Activated CD4-positive, alpha-beta memory T cell treated with anti-CD3 and anti-CD28 coated beads for 36 hours (primary cell): ENCODE measurements at regions of chr11 and their contacts with region 1.

Region 1: DNA sequence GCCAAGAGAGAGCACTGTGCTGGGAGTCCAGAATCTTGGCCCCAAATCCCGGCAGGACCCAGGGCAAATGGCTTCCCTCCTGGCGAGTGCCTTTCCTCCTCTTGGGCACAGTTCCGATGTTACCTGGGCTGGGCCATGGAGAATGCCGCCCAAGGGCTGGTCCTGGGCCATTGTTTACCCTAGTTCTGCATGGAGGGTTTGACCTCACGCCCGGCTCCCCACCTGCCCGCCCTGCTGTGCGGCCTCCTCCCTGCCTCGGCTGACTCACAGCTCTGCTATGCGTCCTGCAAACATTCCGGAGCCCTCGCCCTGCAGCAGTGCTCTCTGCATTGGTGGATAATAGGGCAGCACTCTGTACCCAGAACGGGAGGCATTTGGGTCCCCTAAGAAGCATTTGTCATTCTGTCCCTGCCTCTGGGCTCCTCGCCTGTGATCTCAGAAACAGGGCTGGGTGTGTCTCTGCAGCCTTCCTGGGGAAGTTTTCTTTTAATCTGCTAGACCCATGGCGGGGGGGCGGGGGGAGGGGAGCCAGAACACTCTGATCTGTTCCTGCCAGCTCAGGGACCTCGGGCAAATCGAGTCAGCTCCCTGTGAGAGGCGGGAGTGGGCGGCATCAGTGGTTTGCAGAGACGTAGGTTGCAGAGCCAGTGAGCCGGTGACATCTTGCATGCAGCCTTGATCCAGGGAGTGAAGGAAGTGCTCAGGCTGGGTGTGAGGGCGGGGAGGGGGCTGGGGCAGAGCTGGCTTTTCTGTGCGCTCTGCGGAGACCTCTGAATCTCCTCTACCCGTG is 32.9 kb upstream of the SMIM38 start:
- DNase-seq: peak; percentile 88
- H3K4me3 Mint-ChIP-seq: peak overlapping the region; percentile 18
- H3K27ac Mint-ChIP-seq: peak overlapping the region; percentile 30
- H3K4me1 Mint-ChIP-seq: peaks cover 37% of the 10 kb centered on the region
- H3K27me3 Mint-ChIP-seq: no peaks in the 10 kb centered on the region

Region 2: GRCh38 chr11:69144316-69145061 is 21.7 kb after region 1 on chr11:
- CTCF ChIA-PET with region 1: no interaction called
- POLR2A ChIA-PET with region 1: no interaction called
- intact Hi-C with region 1: loop called (anchors 1 kb)
- DNase-seq: peak; percentile 71
- H3K4me3 Mint-ChIP-seq: no peak overlapping the region
- H3K27ac Mint-ChIP-seq: peak overlapping the region; percentile 78
- H3K4me1 Mint-ChIP-seq: peaks cover 15% of the 10 kb centered on the region
- H3K27me3 Mint-ChIP-seq: peaks cover 6% of the 10 kb centered on the region

Region 3: GRCh38 chr11:69166218-69167115 is 43.6 kb after region 1 on chr11:
- CTCF ChIA-PET with region 1: no interaction called
- POLR2A ChIA-PET with region 1: no interaction called
- intact Hi-C with region 1: loop called (anchors 1 kb)
- DNase-seq: peak; percentile 75
- H3K4me3 Mint-ChIP-seq: peak overlapping the region; percentile 16
- H3K27ac Mint-ChIP-seq: peak overlapping the region; percentile 29
- H3K4me1 Mint-ChIP-seq: peaks cover 10% of the 10 kb centered on the region
- H3K27me3 Mint-ChIP-seq: peaks cover 5% of the 10 kb centered on the region